ENCODE measurements at regions of chr3 and their contacts with region 1.

Region 1: DNA sequence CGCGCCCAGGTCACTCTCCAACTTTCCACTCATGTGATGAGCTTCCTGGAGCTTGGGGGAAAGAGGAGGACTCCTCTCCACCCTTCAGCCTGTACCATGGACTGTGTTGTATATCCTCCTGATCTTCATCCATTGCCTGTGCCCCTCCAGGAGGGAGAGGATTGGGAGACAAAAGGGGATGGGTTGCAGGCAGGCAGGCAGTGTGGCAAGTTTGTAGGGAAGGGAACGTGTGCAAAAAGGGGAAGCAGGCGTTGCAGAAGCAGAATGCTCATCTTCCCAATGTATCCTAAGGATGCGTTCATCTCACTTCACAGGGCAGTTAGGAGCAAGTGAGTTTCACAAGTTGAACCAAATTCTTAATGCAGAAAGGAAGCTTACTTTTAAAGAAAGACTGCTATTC is 28.1 kb upstream of the GHSR start:
- DNase-seq: peak; percentile 10
- H3K4me3 ChIP-seq: peak overlapping the region; percentile 99
- H3K27ac ChIP-seq: no peak overlapping the region
- H3K4me1 ChIP-seq: no peaks in the 10 kb centered on the region
- H3K27me3 ChIP-seq: no peaks in the 10 kb centered on the region

Region 2: GRCh38 chr3:172094621-172095557 is 381.5 kb before region 1 on chr3:
- in situ Hi-C with region 1: no loop called
- DNase-seq: peak; percentile 55
- H3K4me3 ChIP-seq: no peak overlapping the region
- H3K27ac ChIP-seq: peak overlapping the region; percentile 54
- H3K4me1 ChIP-seq: peaks cover 75% of the 10 kb centered on the region
- H3K27me3 ChIP-seq: no peaks in the 10 kb centered on the region

Region 3: DNA sequence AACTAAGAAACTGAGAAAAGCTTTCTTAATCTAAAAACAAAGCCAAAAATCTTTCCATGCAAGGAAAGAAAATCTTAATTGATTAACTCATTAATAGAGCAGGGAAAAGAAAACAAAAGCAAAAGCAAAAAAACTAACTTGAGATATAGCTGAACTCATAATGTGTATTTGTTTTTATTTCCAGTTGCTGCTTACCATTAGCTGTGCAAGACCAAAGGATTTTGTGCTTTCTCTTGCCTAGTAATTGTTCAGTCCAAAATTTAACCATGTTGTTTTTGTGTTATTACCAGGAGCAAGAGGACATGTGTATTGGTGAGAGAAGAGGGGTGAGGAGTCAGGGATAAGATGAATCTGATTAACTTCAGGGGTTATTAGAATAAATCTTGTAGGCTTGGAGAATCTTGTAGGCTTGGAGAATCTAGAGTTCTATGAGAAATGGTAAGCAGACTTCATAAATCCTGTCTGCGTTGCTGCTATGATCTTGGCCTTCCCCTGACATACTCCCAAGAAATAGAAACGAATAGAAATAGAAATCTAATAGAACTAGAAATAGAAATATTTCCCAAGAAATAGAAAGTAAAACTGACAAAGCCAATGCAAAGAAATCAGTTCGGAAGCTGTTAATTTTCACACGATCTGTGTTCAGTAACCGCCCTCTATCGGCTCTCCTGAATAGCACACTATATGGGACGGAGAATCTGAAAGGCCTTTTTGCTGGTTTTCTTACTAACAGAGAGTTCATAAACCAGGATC is 119.5 kb after region 1 on chr3:
- in situ Hi-C with region 1: loop called (anchors 10 kb)
- DNase-seq: peak; percentile 86
- H3K4me3 ChIP-seq: peak overlapping the region; percentile 71
- H3K27ac ChIP-seq: peak overlapping the region; percentile 21
- H3K4me1 ChIP-seq: peaks cover 19% of the 10 kb centered on the region
- H3K27me3 ChIP-seq: no peaks in the 10 kb centered on the region

Region 4: GRCh38 chr3:172666873-172667694 is 190.7 kb after region 1 on chr3:
- in situ Hi-C with region 1: loop called (anchors 10 kb)
- DNase-seq: peak; percentile 84
- H3K4me3 ChIP-seq: no peak overlapping the region
- H3K27ac ChIP-seq: no peak overlapping the region
- H3K4me1 ChIP-seq: 0 out of 2 replicates have a peak, but pooled peaks cover 11% of the 10 kb centered on the region
- H3K27me3 ChIP-seq: no peaks in the 10 kb centered on the region